ENCODE measurements at regions of chr2 and their contacts with region 1.

Region 1: DNA sequence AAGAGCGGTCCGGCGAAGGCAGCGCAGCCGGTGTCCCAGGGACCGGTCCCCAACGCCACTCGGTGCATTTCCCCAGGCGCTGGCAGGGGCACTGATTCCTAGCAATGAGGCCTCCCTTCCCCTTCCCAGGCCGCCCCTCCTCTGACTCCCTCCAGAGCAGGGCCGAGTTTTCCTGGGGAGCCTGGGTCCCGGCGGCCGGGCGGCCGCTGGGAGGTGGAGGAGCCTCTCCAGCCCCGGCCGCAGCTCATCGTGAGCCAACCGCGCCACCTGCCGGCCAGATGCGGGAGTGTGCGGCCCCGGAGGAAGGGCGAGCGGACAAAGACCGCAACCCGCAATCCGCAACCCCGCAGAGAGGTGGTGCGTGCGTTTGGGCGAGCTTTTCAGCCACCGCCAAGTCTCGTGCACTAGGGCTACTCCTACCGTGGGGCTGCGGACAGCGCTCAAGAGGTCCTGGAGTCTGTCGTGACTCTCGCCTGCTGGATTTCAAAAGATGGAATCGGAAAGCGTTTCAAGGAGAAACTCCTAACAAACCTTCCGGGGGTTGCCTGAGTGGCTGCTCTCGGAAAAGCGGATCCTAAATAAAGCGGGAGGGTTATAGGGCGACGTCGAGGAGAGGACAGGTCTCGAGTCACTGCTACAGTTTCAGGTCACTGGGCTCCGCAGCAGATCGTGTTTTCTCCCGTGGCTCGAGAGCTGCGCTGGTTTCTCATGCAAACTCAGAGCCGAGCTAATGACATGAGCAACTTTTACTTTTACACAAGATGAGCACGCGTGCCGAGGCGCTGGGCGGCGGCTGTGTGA is 1.5 kb upstream of the EPHA4 start:
- DNase-seq: peak; percentile 85 to 91
- ATAC-seq: peak; percentile 81 to 83 (median 82)
- H3K4me3 ChIP-seq: peak overlapping the region; percentile 93
- H3K27ac ChIP-seq: peak overlapping the region; percentile 78
- H3K4me1 ChIP-seq: peaks cover 5% of the 10 kb centered on the region
- H3K27me3 ChIP-seq: peaks cover 0 to 10% (median 0%) of the 10 kb centered on the region in 3 donors
- CTCF ChIP-seq: peak; percentile 98

Region 2: DNA sequence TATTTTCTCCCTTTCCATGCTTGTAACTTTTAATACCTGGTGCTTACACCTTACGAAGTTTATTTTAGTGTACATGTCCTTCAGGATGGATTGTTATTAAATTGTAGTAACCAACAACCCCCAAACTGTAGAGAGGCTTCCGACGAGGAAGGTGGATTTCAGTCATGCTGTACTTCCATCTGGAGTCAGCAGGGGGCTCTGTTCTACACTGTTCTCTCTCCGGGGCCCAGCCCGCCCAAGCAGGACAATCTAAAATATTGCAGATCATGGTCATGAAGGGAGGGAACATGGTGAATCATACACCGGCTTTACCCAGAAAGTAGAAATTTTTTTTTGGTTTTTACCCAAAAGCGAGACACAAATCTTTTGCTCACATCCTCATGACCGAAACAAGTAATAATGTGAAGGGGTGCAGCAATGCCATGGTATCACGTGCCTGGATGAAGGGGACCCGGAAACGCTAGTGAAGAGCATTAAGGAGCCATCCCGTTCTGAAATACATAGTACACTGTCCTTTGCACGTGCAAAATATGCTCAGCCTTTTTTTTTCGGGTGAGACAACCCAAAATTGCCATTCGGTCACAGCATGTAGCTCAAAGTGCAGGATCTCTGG is 886.3 kb before region 1 on chr2:
- intact Hi-C with region 1: loop called (anchors 1 to 2 kb)
- DNase-seq: peak; percentile 64 to 73
- ATAC-seq: peak; percentile 81 to 97 (median 85)
- H3K4me3 ChIP-seq: no peak overlapping the region
- H3K27ac ChIP-seq: no peak overlapping the region
- H3K4me1 ChIP-seq: no peaks in the 10 kb centered on the region
- H3K27me3 ChIP-seq: no peaks in the 10 kb centered on the region
- CTCF ChIP-seq: peak; percentile 88

Region 3: DNA sequence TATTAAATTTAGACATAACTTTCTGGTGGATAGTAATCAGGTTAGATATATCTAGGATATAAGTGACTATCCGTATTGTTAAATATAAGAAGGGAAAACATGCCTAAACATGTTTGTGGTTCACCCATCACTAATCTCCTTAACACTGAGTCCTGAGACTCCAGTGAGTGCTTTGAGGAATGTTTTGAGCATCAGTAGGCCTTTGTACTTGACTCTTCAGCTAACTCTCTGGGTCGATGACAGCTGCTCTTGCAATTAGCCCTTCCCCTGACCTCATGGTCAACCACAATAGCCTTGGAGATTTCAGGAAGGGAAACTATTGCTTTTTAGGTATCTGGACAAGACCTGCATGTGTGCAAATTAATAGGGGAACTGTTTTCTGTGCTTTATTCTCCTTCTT is 718.3 kb before region 1 on chr2:
- intact Hi-C with region 1: loop called in 1 of 2 experiments (anchors 10 kb)
- DNase-seq: no peak
- ATAC-seq: no peak
- H3K4me3 ChIP-seq: no peak overlapping the region
- H3K27ac ChIP-seq: no peak overlapping the region
- H3K4me1 ChIP-seq: peaks cover 2% of the 10 kb centered on the region
- H3K27me3 ChIP-seq: no peaks in the 10 kb centered on the region
- CTCF ChIP-seq: no peak

Region 4: GRCh38 chr2:220966636-220967035 is 607.0 kb before region 1 on chr2:
- intact Hi-C with region 1: loop called in 1 of 2 experiments (anchors 10 kb)
- DNase-seq: no peak
- ATAC-seq: no peak
- H3K4me3 ChIP-seq: no peak overlapping the region
- H3K27ac ChIP-seq: no peak overlapping the region
- H3K4me1 ChIP-seq: no peaks in the 10 kb centered on the region
- H3K27me3 ChIP-seq: no peaks in the 10 kb centered on the region
- CTCF ChIP-seq: no peak

Region 5: DNA sequence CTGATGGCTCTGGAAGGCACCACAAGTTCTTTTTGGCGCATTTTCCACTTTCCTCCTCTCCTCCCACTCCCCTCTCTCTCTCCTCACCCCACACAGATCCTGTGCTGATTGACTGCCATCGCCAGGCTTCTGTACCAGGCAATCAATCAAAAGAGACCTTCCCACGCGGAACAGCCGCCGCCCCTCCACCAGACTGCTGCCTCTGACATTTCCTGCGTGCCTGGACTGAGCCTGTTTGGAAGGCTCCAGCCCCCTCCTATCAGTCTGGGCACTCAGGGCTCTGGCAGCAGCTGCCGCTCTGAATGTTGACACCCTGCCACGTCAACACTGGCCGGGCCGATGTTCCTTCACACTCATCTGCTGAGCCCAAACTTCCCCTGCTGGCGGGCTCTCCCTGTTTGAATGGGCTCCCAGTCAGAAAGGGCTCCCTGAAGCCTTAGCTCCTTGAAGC is 469.2 kb before region 1 on chr2:
- intact Hi-C with region 1: loop called in 1 of 2 experiments (anchors 10 kb)
- DNase-seq: peak; percentile 74 to 83
- ATAC-seq: peak; percentile 88 to 98 (median 95)
- H3K4me3 ChIP-seq: peak overlapping the region; percentile 25
- H3K27ac ChIP-seq: no peak overlapping the region
- H3K4me1 ChIP-seq: peaks cover 7% of the 10 kb centered on the region
- H3K27me3 ChIP-seq: peaks cover 0 to 2% (median 0%) of the 10 kb centered on the region in 3 donors
- CTCF ChIP-seq: peak; percentile 8

Region 6: DNA sequence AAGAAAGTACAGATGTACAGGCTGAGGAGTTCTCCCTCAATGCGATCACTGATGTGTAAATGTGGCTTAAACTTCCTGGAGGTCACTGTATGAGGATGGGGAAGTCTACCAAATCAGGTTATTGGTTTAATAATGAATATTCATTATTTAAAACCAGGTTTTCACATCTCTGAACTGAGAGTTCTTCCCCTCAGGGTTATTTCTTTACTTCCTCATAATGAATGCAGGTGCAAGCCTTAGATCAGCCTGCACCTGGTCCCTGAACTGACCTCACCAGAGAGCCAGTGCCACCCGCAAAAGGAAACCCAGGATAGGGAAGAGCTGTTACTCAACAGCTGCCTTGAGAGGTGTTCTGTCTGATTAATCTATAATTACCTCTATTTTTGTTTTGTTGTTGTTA is 370.5 kb before region 1 on chr2:
- intact Hi-C with region 1: no loop called
- DNase-seq: no peak
- ATAC-seq: no peak
- H3K4me3 ChIP-seq: no peak overlapping the region
- H3K27ac ChIP-seq: no peak overlapping the region
- H3K4me1 ChIP-seq: no peaks in the 10 kb centered on the region
- H3K27me3 ChIP-seq: no peaks in the 10 kb centered on the region
- CTCF ChIP-seq: no peak

Region 7: GRCh38 chr2:221444106-221444505 is 129.5 kb before region 1 on chr2:
- intact Hi-C with region 1: loop called in 1 of 2 experiments (anchors 5 kb)
- DNase-seq: no peak
- ATAC-seq: peak; percentile 89 to 97 (median 94)
- H3K4me3 ChIP-seq: no peak overlapping the region
- H3K27ac ChIP-seq: peak overlapping the region; percentile 73
- H3K4me1 ChIP-seq: peaks cover 12% of the 10 kb centered on the region
- H3K27me3 ChIP-seq: no peaks in the 10 kb centered on the region
- CTCF ChIP-seq: no peak

Measured in psoas muscle (tissue), 8 donors.